ENCODE measurements at regions of chr22 and their contacts with region 1.

Region 1: DNA sequence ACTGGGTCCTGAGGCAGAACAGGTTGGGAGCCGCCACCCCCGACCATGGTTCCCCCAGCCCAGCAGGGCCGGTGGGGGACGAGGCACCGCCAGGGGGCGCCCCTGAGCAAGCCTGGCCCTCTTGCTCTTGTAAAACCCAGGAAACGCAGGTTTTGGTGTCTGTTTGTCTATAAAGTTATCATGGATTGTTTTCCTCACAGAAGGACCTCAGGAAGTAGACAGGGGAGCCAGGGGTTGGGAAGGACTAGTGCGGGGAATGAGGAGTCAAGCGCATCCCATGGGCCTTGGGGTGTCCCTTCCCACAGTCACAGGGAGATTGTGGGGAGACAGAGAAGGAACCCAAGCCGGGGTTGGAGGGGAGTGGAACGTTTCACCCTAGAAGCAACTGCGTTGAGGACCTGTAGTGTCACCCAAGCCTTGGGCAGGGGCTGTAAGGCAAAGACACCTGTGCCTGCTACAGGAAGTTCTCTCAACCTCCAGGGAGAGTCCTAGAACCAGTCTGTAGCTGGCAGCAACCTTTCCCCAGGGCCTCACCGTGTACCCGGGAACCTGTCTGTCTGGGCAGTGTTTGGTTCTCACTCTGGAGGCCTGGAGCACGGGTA is 26.4 kb downstream of the KCTD17 start:
- DNase-seq: peak; percentile 96
- H3K4me3 Mint-ChIP-seq: peak overlapping the region; percentile 79
- H3K27ac Mint-ChIP-seq: peak overlapping the region; percentile 98
- H3K4me1 Mint-ChIP-seq: peaks cover 56% of the 10 kb centered on the region
- H3K27me3 Mint-ChIP-seq: no peaks in the 10 kb centered on the region

Region 2: GRCh38 chr22:37063431-37064420 is 14.3 kb before region 1 on chr22:
- intact Hi-C with region 1: no loop called
- DNase-seq: no peak
- H3K4me3 Mint-ChIP-seq: no peak overlapping the region
- H3K27ac Mint-ChIP-seq: no peak overlapping the region
- H3K4me1 Mint-ChIP-seq: peaks cover 21% of the 10 kb centered on the region
- H3K27me3 Mint-ChIP-seq: no peaks in the 10 kb centered on the region

Region 3: DNA sequence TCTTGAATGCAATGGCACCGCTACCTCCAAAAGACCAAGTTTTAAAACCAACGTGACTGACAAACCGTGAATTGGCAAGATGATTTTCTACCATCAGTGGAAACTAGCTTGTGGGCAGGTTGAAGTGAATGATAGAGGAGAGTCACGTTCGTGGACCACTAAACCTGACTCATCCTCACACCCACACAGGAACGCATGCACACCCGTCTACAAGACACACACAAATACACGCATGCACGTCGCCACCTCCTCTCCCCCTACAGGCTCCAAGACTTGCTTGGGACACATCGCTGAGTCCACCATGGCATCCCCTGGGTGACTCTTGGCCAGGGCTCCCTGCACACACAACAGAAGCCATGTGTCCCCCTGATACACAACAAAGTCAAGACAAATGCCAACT is 17.1 kb after region 1 on chr22:
- intact Hi-C with region 1: loop called (anchors 2 kb)
- DNase-seq: peak; percentile 67
- H3K4me3 Mint-ChIP-seq: peak overlapping the region; percentile 24
- H3K27ac Mint-ChIP-seq: peak overlapping the region; percentile 42
- H3K4me1 Mint-ChIP-seq: peaks cover 30% of the 10 kb centered on the region
- H3K27me3 Mint-ChIP-seq: no peaks in the 10 kb centered on the region

Region 4: GRCh38 chr22:37148742-37149665 is 71.0 kb after region 1 on chr22:
- intact Hi-C with region 1: loop called (anchors 2 kb)
- DNase-seq: peak; percentile 68
- H3K4me3 Mint-ChIP-seq: peak overlapping the region; percentile 96
- H3K27ac Mint-ChIP-seq: peak overlapping the region; percentile 99
- H3K4me1 Mint-ChIP-seq: peaks cover 54% of the 10 kb centered on the region
- H3K27me3 Mint-ChIP-seq: peaks cover 2% of the 10 kb centered on the region

Measured in activated CD4-positive, alpha-beta T cell treated with anti-CD3 and anti-CD28 coated beads, Interleukin-2, amount 10 ng/mL, durations not matched to agents 24 days and 14 days (primary cell).